ENCODE measurements at regions of chr5 and their contacts with region 1.

Region 1: DNA sequence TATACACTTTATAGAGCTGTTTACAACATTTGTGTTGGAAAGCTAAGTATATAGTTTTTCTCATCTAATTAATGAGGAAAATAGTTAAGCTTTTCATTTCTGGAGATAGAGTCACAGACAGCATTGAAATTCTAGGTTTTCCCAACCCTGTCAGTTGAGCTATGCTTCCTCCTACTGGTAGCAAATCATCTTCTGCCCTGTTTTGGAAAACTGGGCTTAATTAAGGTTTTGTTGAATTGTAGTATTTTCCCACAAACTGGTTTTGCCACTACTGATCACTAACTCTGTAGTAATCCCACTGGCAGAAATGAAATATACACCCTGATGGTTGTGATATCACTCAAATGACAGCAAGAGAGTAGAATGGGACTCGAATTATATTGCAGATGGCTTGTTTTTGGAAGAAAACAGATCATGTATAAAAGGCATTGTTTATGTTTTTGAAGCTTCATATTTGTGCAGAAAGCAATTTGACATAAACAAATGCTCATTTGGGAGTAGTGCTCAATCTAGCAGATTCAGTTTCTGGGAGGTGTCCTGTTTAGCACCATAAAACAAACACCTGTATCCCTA is 46.6 kb downstream of the CD180 start:
- DNase-seq: no peak
- ATAC-seq: no peak
- H3K4me3 ChIP-seq: no peak overlapping the region
- H3K4me1 ChIP-seq: no peaks in the 10 kb centered on the region
- CTCF ChIP-seq: no peak

Region 2: DNA sequence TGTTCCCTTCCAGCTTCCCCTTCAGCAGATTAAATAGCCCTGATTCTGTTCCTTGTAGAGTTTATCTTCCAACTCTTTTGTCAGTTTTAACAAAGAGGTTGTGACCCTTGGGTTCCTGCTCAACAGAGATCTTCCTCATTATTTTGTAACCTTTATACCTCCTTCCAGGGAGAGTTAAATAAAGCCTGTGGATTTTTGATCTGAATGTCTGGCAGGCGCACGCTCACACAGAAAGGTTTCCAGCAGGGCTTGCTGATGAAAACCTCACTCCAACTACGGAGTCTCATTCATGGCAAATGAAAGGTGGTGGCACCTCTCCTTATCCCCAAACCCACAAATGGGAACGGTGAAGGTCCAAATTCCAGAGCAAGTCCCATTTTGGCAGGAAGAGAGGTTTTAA is 876.9 kb before region 1 on chr5:
- intact Hi-C with region 1: no loop called
- DNase-seq: no peak
- ATAC-seq: no peak
- H3K4me3 ChIP-seq: no peak overlapping the region
- H3K4me1 ChIP-seq: no peaks in the 10 kb centered on the region
- CTCF ChIP-seq: no peak

Region 3: GRCh38 chr5:66814146-66814991 is 335.7 kb before region 1 on chr5:
- intact Hi-C with region 1: loop called in 1 of 2 experiments (anchors 10 kb)
- DNase-seq: peak in 1 of 3 donors; percentile 75
- ATAC-seq: peak; percentile 46
- H3K4me3 ChIP-seq: no peak overlapping the region
- H3K4me1 ChIP-seq: no peaks in the 10 kb centered on the region
- CTCF ChIP-seq: peak; percentile 55